CD4-positive, alpha-beta T cell (primary cell): ENCODE measurements at regions of chr19 and their contacts with region 1.

Region 1: GRCh38 chr19:54357381-54357780 is 7.3 kb downstream of the LAIR1 start:
- DNase-seq: no peak
- ATAC-seq: no peak
- H3K4me3 ChIP-seq: no peak overlapping the region
- H3K4me3 Mint-ChIP-seq: no peak overlapping the region
- H3K27ac ChIP-seq: no peak overlapping the region
- H3K27ac Mint-ChIP-seq: no peak overlapping the region
- H3K4me1 ChIP-seq: peaks cover 21% of the 10 kb centered on the region
- H3K4me1 Mint-ChIP-seq: peaks cover 25% of the 10 kb centered on the region
- H3K27me3 ChIP-seq: no peaks in the 10 kb centered on the region
- H3K27me3 Mint-ChIP-seq: no peaks in the 10 kb centered on the region
- CTCF ChIP-seq: no peak

Region 2: DNA sequence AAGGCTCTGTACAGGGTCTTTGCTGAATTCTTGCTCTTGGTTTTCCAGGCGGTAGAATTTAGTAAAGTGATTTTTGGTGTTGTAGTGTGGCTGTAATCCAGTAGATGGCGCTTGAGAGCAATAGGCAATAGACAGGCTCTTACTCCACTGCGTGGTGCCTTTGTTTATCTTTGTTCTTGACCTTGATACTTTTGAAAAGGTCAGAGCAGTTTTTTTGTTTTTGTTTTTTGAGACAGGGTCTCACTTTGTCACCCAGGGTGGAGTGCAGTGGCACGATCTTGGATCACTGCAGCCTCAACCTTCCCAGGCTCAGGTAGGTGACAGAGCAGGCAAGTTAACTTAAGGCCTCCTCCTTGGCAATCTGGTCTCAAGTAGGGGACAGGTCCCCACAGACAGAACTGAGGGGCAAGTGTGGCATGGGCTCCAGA is 32.2 kb before region 1 on chr19:
- CTCF ChIA-PET with region 1: no interaction called
- POLR2A ChIA-PET with region 1: no interaction called
- intact Hi-C with region 1: loop called in 1 of 2 experiments (anchors 2 kb)
- DNase-seq: peak in 12 of 14 experiments; percentile 26 to 81 (median 39)
- ATAC-seq: peak; percentile 78
- H3K4me3 ChIP-seq: no peak overlapping the region
- H3K4me3 Mint-ChIP-seq: no peak overlapping the region
- H3K27ac ChIP-seq: no peak overlapping the region
- H3K27ac Mint-ChIP-seq: no peak overlapping the region
- H3K4me1 ChIP-seq: peaks cover 12% of the 10 kb centered on the region
- H3K4me1 Mint-ChIP-seq: peaks cover 14% of the 10 kb centered on the region
- H3K27me3 ChIP-seq: no peaks in the 10 kb centered on the region
- H3K27me3 Mint-ChIP-seq: peaks cover 21% of the 10 kb centered on the region
- CTCF ChIP-seq: peak; percentile 93